ENCODE measurements at regions of chr1 and their contacts with region 1.

Region 1: GRCh38 chr1:185317034-185317885 is at the start of gene IVNS1ABP:
- DNase-seq: peak; percentile 93 to 95
- ATAC-seq: peak; percentile 90 to 91
- H3K4me3 ChIP-seq: peak within 1 kb of the TSS; percentile 75 to 95 (median 82)
- H3K27ac ChIP-seq: peak within 1 kb of the TSS; percentile 94 to 99 (median 98)
- H3K4me1 ChIP-seq: peaks cover 25 to 46% of the 10 kb centered on the region in 2 donors
- H3K27me3 ChIP-seq: no peaks in the 10 kb centered on the region
- CTCF ChIP-seq: peak in 2 of 5 experiments; percentile 6 to 37
- POLR2A ChIP-seq: peak; percentile 95 to 98
- total RNA-seq, gene IVNS1ABP: 18.3 to 38.1 (median 32.3) TPM

Region 2: GRCh38 chr1:184754476-184755225 is 562.6 kb before region 1 on chr1 and contains the start of gene EDEM3:
- in situ Hi-C with region 1: no loop called
- intact Hi-C with region 1: loop called (anchors 10 kb)
- DNase-seq: peak; percentile 99 to 100
- ATAC-seq: peak; percentile 97
- H3K4me3 ChIP-seq: peak within 1 kb of the TSS; percentile 94 to 97 (median 96)
- H3K27ac ChIP-seq: peak within 1 kb of the TSS; percentile 93 to 99 (median 96)
- H3K4me1 ChIP-seq: peaks cover 16 to 17% of the 10 kb centered on the region in 2 donors
- H3K27me3 ChIP-seq: no peaks in the 10 kb centered on the region
- CTCF ChIP-seq: peak in 1 of 5 experiments; percentile 15
- POLR2A ChIP-seq: peak; percentile 98
- total RNA-seq, gene EDEM3: 18.1 to 51.1 (median 31.9) TPM

Region 3: DNA sequence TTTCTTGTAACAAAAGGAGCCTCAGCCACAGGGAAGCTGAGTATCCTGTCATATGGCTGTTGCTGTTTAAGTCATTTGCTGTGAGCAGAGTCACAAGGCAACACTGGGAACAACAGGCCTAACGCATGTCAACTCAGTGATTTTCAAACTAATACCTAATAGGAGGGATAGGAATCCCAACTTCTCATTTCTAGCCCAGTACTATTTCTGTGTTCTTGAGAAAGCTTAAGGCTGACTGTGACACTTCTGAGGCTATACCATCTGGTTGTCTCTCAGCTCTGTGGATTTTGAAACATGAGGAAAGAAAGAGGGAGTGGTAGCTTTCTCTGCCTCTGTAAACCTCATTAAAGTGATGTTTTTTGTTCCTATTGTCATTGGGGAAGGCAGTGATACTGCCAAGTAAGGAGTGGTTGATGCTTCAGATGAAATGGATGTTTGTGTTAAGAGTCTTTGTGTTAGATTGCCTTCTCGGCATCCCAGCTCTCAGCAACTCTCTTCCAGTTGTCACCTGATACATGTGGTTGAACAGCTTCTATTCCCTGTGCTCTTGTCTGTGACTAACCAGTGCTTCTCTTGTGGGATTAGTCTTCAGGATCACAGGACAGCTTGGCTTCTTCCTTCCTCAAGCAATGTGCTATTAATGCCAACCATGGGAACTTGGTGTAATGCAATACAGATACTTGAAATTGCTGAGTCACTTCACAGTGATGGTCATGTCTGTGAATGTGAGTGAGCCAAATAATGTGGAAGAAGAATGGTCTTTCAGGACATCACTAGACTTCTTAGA is 166.6 kb after region 1 on chr1:
- in situ Hi-C with region 1: no loop called
- intact Hi-C with region 1: loop called (anchors 5 kb)
- DNase-seq: peak; percentile 34 to 55
- ATAC-seq: peak; percentile 96 to 97
- H3K4me3 ChIP-seq: no peak overlapping the region
- H3K27ac ChIP-seq: peak overlapping the region; percentile 70 to 83 (median 77)
- H3K4me1 ChIP-seq: peaks cover 8 to 42% of the 10 kb centered on the region in 2 donors
- H3K27me3 ChIP-seq: no peaks in the 10 kb centered on the region
- CTCF ChIP-seq: no peak
- POLR2A ChIP-seq: no peak

Region 4: GRCh38 chr1:185670187-185670627 is 352.9 kb after region 1 on chr1:
- in situ Hi-C with region 1: no loop called
- intact Hi-C with region 1: loop called (anchors 10 kb)
- DNase-seq: no peak
- ATAC-seq: no peak
- H3K4me3 ChIP-seq: no peak overlapping the region
- H3K27ac ChIP-seq: no peak overlapping the region
- H3K4me1 ChIP-seq: peaks cover 0 to 5% of the 10 kb centered on the region in 2 donors
- H3K27me3 ChIP-seq: no peaks in the 10 kb centered on the region
- CTCF ChIP-seq: peak in 2 of 5 experiments; percentile 24 to 36
- POLR2A ChIP-seq: no peak

Region 5: GRCh38 chr1:186375088-186375953 is 1058.1 kb after region 1 on chr1 and contains the starts of genes ODR4 and TPR:
- in situ Hi-C with region 1: loop called in 1 of 4 experiments (anchors 25 kb)
- intact Hi-C with region 1: no loop called
- DNase-seq: peak; percentile 95 to 98
- ATAC-seq: peak; percentile 95 to 96
- H3K4me3 ChIP-seq: peak within 1 kb of the TSS; percentile 87 to 97 (median 89)
- H3K27ac ChIP-seq: peak within 1 kb of the TSS; percentile 97 to 98 (median 97)
- H3K4me1 ChIP-seq: peaks cover 24 to 27% of the 10 kb centered on the region in 2 donors
- H3K27me3 ChIP-seq: no peaks in the 10 kb centered on the region
- CTCF ChIP-seq: peak; percentile 79 to 94 (median 92)
- POLR2A ChIP-seq: peak; percentile 79 to 86
- total RNA-seq, gene ODR4: 11.3 to 16.8 (median 11.9) TPM
- total RNA-seq, gene TPR: 56.6 to 84.7 (median 62.9) TPM